Mammary epithelial cell (primary cell): ENCODE measurements at regions of chr19 and their contacts with region 1.

Region 1: DNA sequence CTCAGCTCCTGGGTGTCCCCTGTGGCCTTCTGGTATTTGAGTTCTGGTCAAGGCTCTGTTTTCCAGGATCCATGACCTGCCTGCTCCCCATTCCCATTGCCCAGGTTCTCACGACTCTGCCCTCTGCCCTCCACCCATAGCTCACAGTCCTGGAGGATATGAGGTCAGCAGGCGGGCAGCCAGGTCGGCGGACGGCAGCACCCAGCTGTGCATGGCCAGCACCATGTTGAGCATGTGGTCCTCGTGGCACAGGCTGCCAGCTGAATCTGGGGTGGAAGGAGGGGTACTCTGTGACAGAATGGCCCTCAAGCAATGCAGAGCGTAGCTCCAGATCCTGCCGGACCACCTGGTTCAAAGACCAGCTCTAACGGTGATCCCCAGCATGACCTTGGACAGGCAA is 5.1 kb downstream of the RASGRP4 start:
- DNase-seq: no peak
- H3K4me3 ChIP-seq: no peak overlapping the region
- H3K27ac ChIP-seq: no peak overlapping the region
- H3K4me1 ChIP-seq: peaks cover 10% of the 10 kb centered on the region
- H3K27me3 ChIP-seq: peaks cover 1% of the 10 kb centered on the region
- CTCF ChIP-seq: no peak

Region 2: GRCh38 chr19:38483016-38483630 is 62.2 kb after region 1 on chr19:
- CTCF ChIA-PET with region 1: no interaction called
- dilution Hi-C with region 1: loop called (anchors 5 kb)
- in situ Hi-C with region 1: no loop called
- intact Hi-C with region 1: no loop called
- DNase-seq: no peak
- H3K4me3 ChIP-seq: no peak overlapping the region
- H3K27ac ChIP-seq: no peak overlapping the region
- H3K4me1 ChIP-seq: no peaks in the 10 kb centered on the region
- H3K27me3 ChIP-seq: no peaks in the 10 kb centered on the region
- CTCF ChIP-seq: no peak